Motor neuron (in vitro differentiated cells): ENCODE measurements at regions of chr1 and their contacts with region 1.

Region 1: DNA sequence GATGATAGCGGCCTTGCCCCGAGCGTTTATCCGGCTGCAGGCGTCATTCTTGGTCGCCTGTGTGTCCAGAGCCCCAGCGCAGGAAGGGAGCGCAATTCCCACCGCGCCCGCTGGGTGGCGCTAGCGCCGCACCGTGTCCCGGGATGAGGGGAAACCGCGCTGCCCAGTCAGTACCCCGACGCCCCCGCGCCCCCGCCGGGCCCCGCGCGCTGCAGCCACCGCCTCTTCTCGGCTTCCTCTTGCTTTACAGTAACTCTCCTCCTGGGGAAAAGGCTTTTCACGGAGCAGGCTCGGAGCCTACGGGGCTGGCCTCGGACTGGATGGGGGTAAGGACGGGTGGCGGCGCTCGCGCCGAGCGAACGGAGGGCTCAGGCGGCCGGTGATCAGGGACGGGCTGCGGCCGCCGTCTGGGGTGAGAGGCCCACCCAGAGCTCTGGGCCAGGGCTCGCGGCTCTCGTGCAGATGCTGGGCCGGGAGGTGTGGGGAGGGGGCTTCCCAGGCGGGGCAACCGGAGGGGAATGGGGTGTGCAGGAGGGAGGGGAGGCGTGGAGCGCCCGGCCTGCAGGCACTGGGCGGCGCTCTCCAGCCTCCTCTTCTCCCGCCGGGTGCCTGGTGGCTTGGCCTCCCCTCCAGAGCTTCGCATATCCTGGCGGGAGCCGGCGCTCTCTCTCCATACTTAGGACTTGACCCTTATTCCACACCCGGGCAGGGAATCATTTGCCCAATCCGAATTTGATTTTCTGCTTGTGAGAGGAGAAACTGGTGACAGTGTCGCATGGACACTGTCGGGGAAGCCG is 29.8 kb downstream of the TEX35 start:
- ATAC-seq: peak; percentile 74 to 88 (median 86)
- H3K4me3 ChIP-seq: peak overlapping the region; percentile 44 to 58 (median 47)
- H3K27ac ChIP-seq: peak overlapping the region; percentile 69 to 83
- H3K4me1 ChIP-seq: peaks cover 3 to 13% of the 10 kb centered on the region in 2 donors

Region 2: GRCh38 chr1:177723533-177723932 is 819.2 kb before region 1 on chr1:
- in situ Hi-C with region 1: no loop called
- ATAC-seq: no peak
- H3K4me3 ChIP-seq: no peak overlapping the region
- H3K27ac ChIP-seq: no peak overlapping the region
- H3K4me1 ChIP-seq: no peaks in the 10 kb centered on the region

Region 3: DNA sequence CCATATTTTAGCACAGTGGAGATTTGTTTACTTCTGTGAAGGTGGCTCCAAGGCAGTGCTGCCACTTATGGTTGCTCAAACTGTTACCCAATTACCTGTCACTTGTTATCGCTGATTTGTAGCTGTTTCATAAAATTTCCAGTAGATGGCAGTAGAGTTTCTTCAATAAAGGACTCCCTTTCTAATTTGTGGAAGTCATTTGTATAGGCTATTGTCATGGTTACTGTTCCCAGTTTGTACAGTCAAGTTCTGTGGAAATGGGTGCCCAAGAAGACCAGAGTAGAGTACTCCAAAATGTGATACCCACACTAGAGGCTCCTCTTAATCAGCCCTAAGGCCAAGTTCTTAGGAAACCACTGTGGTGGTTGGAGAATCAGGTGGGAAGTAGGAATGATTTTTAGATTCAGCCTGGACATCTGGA is 232.1 kb before region 1 on chr1:
- in situ Hi-C with region 1: loop called in 1 of 9 experiments (anchors 25 kb)
- ATAC-seq: peak; percentile 58 to 97 (median 76)
- H3K4me3 ChIP-seq: no peak overlapping the region
- H3K27ac ChIP-seq: no peak overlapping the region
- H3K4me1 ChIP-seq: peaks cover 0 to 2% of the 10 kb centered on the region in 2 donors

Region 4: GRCh38 chr1:178768423-178768822 is 225.7 kb after region 1 on chr1:
- in situ Hi-C with region 1: loop called in 2 of 9 experiments (anchors 25 kb)
- ATAC-seq: peak in 3 of 8 experiments; percentile 59 to 68 (median 59)
- H3K4me3 ChIP-seq: no peak overlapping the region
- H3K27ac ChIP-seq: no peak overlapping the region
- H3K4me1 ChIP-seq: no peaks in the 10 kb centered on the region

Region 5: GRCh38 chr1:179002552-179003345 is 460.0 kb after region 1 on chr1:
- in situ Hi-C with region 1: loop called in 8 of 9 experiments (anchors 10 to 25 kb)
- ATAC-seq: peak; percentile 75 to 97 (median 94)
- H3K4me3 ChIP-seq: no peak overlapping the region
- H3K27ac ChIP-seq: no peak overlapping the region
- H3K4me1 ChIP-seq: no peaks in the 10 kb centered on the region

Region 6: DNA sequence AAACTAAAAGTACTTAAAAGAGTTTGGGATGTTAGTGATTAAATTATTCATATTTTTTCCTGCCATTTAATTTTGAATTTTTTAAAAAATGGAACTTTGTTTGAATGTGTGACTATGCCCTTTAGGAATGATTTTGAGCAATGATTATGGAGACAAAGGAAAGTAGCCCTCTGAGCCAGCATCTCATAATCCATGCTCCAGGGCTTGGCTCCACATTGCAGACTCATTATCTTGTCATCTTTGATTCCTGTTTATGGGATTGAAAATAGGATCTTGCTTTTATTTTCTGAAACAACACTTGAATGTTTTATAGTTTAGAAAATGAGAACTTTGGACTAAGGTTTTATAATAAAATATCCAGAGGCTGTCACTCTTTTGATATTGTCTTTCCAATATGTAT is 837.5 kb after region 1 on chr1:
- in situ Hi-C with region 1: loop called in 1 of 9 experiments (anchors 25 kb)
- ATAC-seq: no peak
- H3K4me3 ChIP-seq: no peak overlapping the region
- H3K27ac ChIP-seq: no peak overlapping the region
- H3K4me1 ChIP-seq: no peaks in the 10 kb centered on the region